Vagina (tissue), 2 donors: ENCODE measurements at regions of chr3 and their contacts with region 1.

Region 1: GRCh38 chr3:98433764-98434163 is 29.2 kb upstream of the OR5K1 start:
- DNase-seq: no peak
- H3K4me3 ChIP-seq: no peak overlapping the region
- H3K27ac ChIP-seq: no peak overlapping the region
- H3K4me1 ChIP-seq: no peaks in the 10 kb centered on the region
- H3K27me3 ChIP-seq: no peaks in the 10 kb centered on the region
- CTCF ChIP-seq: no peak
- POLR2A ChIP-seq: no peak

Region 2: DNA sequence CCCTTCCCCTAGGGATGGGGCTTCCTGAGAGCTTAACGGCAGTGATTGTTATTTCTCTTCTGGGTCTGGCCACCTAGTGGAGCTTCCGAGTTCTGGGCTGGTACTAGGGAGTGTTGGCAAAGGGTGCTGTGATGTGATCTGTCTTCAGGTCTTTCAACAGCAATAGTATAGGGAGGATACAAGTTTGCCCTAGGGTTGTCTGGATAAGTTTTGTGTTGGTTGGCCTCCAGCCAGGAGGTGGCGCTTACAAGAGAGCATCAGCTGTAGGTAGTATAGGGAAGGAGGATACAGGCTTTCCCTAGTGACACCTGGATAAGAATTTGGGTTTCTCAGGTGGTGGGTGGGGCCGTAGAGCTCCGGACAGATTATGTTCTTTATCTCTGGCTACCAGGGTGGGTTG is 178.8 kb after region 1 on chr3:
- intact Hi-C with region 1: no loop called
- DNase-seq: no peak
- H3K4me3 ChIP-seq: no peak overlapping the region
- H3K27ac ChIP-seq: no peak overlapping the region
- H3K4me1 ChIP-seq: no peaks in the 10 kb centered on the region
- H3K27me3 ChIP-seq: no peaks in the 10 kb centered on the region
- CTCF ChIP-seq: no peak
- POLR2A ChIP-seq: no peak

Region 3: DNA sequence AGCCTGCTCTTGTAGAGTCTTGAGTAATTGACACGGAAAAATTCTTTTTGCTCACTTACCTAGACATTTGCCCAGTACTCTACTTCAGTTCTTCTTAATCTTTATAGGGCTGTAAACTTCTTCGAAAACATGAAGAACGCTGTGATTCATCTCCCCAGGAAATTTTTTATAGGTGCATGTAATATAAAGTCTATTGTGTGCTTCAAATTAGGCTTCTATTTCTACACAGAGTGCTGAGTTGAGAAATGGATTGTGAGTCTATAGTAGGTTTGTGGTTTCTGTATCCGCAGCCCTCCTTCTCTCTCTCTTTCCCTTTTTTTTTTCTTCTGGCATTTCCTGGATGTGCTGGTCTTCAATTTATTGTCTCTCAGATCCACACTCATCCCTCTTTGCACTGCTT is 651.1 kb after region 1 on chr3:
- intact Hi-C with region 1: loop called (anchors 10 kb)
- DNase-seq: no peak
- H3K4me3 ChIP-seq: no peak overlapping the region
- H3K27ac ChIP-seq: no peak overlapping the region
- H3K4me1 ChIP-seq: peaks cover 4% of the 10 kb centered on the region
- H3K27me3 ChIP-seq: no peaks in the 10 kb centered on the region
- CTCF ChIP-seq: no peak
- POLR2A ChIP-seq: no peak